ENCODE measurements at regions of chr3 and their contacts with region 1.

Region 1: DNA sequence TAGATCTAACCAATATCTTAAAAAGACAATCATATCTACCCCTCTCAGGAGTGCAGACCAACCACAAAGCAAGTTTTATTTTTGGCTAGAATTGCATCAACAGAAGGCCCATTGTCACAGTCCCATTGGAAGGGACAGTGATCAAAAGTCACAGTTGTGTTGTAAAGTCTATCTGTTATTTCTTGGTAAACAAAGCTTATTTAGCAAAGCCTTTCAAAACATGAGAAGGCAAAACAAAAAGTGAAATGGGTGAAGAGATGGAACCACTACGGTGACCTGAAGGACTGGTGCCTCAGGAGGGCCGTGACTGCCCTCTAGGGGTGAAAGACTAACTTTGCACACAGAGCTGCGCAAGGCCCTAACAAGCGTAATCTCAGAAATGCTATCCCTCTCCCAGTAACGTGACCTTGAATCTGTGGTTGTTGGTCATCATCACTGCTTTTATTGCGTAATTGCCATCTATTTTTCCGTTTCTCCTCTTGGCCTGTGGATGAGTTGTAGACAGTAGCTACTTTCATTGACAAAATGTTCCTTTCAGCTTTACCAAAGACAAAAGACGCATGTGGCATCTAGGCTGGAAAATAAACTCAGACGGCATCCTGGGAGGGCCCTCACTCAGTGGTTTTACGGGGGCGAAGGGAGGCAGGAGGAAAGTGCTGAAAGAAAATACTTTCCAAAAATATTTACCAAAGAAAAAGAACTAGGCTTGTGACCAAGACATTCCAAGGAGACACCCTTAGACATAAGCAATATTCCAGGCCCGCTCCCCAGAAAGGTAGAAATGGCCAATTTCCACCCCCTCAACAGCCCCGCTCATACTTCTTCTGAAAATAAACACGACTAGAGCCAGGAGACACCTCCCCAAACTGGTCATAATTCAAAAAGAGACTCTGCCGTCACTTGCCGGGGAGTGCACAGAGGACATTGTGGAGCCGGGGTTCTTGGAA is 79.4 kb downstream of the FRMD4B start:
- DNase-seq: peak; percentile 64
- ATAC-seq: peak; percentile 99
- H3K4me3 Mint-ChIP-seq: no peak overlapping the region
- H3K27ac Mint-ChIP-seq: no peak overlapping the region; the same call in 1 of the 2 replicates
- H3K4me1 Mint-ChIP-seq: 0 out of 2 replicates have a peak, but pooled peaks cover 2% of the 10 kb centered on the region
- H3K27me3 Mint-ChIP-seq: no peaks in the 10 kb centered on the region
- CTCF ChIP-seq: peak; percentile 83

Region 2: DNA sequence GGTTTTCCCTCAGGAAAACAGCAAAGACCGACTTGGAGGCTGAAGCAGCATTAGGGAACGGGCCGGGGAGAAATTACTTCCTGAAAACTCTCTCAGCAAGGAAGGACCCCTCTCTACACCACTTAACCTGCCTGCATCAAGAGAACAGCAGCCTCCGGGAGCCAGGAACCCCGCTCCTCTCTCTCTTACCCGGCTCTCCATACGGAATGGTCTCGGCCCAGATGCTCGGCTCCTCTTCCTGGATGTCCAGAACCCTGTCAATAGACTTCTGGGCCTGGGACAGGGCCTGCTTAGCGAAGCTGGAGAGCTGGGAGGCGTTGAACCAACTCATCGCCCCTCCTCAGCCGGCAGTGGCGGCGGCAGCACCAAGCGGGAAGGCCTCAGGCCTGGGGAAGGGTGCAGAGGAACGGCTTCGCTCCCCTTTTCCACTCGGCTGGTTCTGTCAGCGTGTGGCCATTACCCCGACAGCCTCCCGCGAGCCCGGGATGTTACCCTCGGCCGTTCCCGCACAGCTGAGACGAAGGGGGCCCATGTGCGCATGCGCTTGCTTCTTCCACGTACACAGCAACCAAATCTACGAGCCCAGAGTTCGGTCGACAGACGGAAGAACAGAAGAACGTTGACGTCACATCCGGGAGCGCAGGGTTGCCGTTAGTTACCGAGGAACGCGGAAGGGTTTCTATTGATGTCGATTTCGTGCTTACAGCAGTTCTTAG is 254.6 kb before region 1 on chr3 and contains the start of gene TMF1:
- CTCF ChIA-PET with region 1: no interaction called
- POLR2A ChIA-PET with region 1: no interaction called
- DNase-seq: peak; percentile 95
- ATAC-seq: peak; percentile 90
- H3K4me3 Mint-ChIP-seq: peak within 1 kb of the TSS; percentile 98
- H3K27ac Mint-ChIP-seq: peak within 1 kb of the TSS; percentile 98
- H3K4me1 Mint-ChIP-seq: peaks cover 15% of the 10 kb centered on the region
- H3K27me3 Mint-ChIP-seq: no peaks in the 10 kb centered on the region
- CTCF ChIP-seq: no peak
- total RNA-seq, gene TMF1: 18.8 to 23.9 TPM (median 20.6 TPM) in 3 replicates

Region 3: GRCh38 chr3:69161587-69162307 is 144.8 kb before region 1 on chr3:
- CTCF ChIA-PET with region 1: interaction called, 120 read pairs
- POLR2A ChIA-PET with region 1: no interaction called
- DNase-seq: no peak
- ATAC-seq: peak; percentile 43
- H3K4me3 Mint-ChIP-seq: no peak overlapping the region
- H3K27ac Mint-ChIP-seq: no peak overlapping the region
- H3K4me1 Mint-ChIP-seq: peaks cover 16% of the 10 kb centered on the region
- H3K27me3 Mint-ChIP-seq: no peaks in the 10 kb centered on the region
- CTCF ChIP-seq: peak; percentile 67

Region 4: GRCh38 chr3:69240651-69241568 is 65.6 kb before region 1 on chr3:
- CTCF ChIA-PET with region 1: interaction called, 13 read pairs
- POLR2A ChIA-PET with region 1: no interaction called
- DNase-seq: no peak
- ATAC-seq: no peak; the same call in none of the 2 replicates
- H3K4me3 Mint-ChIP-seq: no peak overlapping the region
- H3K27ac Mint-ChIP-seq: peak overlapping the region; percentile 7; the same call in 1 of the 2 replicates
- H3K4me1 Mint-ChIP-seq: peaks cover 72% of the 10 kb centered on the region
- H3K27me3 Mint-ChIP-seq: peaks cover 14% of the 10 kb centered on the region
- CTCF ChIP-seq: no peak

Region 5: DNA sequence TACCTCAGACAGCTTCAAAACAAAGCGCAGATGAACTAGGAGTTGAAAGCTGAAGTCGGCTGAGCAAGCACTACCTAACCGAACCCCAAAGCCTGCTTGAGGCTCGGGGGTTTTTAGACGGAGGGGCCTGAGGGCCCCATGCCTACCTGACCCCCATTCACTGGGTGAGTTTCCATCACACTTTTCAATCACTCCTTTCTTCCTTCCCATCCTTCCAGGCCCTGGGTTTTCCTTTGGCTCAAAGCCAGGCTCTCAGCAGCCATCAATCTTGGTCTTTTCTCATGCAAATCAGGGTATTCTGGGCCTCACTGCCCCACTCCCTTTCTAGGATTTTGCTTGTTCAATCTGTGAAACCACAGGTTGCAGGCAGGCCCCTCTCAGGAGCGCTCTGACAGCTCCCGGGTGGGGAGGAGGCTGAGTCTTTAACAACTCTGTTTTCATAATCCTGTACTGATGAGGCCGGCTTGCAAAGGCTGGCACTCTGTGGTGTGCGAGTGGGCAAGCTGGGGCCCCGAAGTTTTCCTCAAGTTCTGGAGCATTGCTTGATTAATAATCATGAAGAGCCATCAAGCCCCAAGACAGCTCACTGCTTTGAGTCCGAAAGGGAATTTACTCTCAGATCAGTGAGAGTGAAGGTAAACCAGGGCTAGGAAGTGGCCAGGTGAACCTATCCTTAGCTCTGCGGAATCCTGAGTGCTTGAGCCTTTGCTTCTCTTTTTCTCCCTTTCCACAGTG is 18.2 kb before region 1 on chr3:
- CTCF ChIA-PET with region 1: interaction called, 14 read pairs
- POLR2A ChIA-PET with region 1: no interaction called
- DNase-seq: peak; percentile 75
- ATAC-seq: peak; percentile 94
- H3K4me3 Mint-ChIP-seq: peak overlapping the region; percentile 53
- H3K27ac Mint-ChIP-seq: peak overlapping the region; percentile 66
- H3K4me1 Mint-ChIP-seq: peaks cover 67% of the 10 kb centered on the region
- H3K27me3 Mint-ChIP-seq: peaks cover 14% of the 10 kb centered on the region
- CTCF ChIP-seq: no peak

Region 6: DNA sequence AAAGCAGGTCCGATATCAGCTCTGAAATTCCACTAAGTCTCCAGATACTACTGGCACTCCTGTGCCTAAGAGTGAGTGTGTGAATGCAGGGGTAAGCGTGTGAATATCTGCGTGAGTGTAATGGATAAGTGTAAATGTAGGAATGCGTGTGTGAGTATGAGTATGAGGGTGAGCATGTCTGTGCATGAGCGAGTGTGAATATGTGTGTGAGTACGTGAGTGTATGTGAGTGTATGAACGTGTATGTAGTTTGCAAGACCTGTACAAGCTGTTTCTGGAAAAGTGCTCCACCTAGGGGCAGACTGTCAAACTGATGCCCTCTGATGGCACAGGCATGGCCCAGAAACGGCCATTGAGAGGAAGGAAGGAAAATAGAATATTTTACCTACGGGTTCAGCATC is 103.7 kb after region 1 on chr3:
- CTCF ChIA-PET with region 1: interaction called, 11 read pairs
- POLR2A ChIA-PET with region 1: no interaction called
- DNase-seq: peak; percentile 65
- ATAC-seq: peak; percentile 92
- H3K4me3 Mint-ChIP-seq: no peak overlapping the region
- H3K27ac Mint-ChIP-seq: no peak overlapping the region
- H3K4me1 Mint-ChIP-seq: peaks cover 23% of the 10 kb centered on the region
- H3K27me3 Mint-ChIP-seq: no peaks in the 10 kb centered on the region
- CTCF ChIP-seq: peak; percentile 61